ENCODE measurements at regions of chr5 and their contacts with region 1.

Region 1: GRCh38 chr5:39014544-39014943 is 59.7 kb downstream of the RICTOR start:
- DNase-seq: no peak
- ATAC-seq: peak; percentile 91

Region 2: DNA sequence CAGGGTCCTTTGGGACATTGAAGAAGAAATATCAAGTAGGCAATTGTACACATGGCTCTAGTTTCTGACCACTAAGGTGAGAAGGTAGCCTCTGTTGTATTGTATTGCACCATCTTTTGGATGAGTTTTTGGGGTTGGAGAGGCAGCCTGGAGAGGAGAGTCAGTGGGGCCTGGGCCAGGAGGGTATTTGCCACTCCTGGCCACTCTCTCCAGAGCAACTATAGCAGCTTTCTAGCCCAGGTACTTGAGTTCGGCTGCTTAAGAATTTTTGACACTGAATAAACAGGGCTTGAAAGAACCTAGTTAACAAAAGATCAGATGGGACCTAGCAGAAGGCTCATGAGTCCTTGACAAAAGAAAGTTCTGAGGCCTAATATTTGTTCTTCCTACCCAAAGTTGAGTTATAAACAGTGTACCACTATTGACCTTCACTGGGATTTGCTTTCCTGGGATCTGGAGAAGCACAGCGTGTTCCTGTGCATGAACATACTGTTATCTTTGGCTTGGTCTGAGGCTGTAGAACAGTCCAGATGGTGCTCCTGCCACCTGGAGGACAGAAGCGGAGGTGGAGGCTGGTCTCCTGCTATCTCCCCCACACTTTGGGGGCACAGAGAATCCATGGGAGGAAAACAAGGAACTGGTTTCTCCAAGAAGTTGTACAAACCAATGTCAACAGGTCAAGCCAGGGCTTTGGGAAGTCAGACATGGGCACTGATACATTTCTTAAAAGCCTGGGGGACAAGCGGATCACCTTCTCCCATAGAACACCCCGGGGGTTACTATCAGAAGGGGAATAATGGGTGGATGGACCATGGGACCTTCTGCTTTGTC is 347.7 kb before region 1 on chr5:
- intact Hi-C with region 1: no loop called
- DNase-seq: peak; percentile 44
- ATAC-seq: peak; percentile 94

Region 3: GRCh38 chr5:38948501-38948900 is 66.0 kb before region 1 on chr5:
- intact Hi-C with region 1: no loop called
- DNase-seq: no peak
- ATAC-seq: no peak

Region 4: DNA sequence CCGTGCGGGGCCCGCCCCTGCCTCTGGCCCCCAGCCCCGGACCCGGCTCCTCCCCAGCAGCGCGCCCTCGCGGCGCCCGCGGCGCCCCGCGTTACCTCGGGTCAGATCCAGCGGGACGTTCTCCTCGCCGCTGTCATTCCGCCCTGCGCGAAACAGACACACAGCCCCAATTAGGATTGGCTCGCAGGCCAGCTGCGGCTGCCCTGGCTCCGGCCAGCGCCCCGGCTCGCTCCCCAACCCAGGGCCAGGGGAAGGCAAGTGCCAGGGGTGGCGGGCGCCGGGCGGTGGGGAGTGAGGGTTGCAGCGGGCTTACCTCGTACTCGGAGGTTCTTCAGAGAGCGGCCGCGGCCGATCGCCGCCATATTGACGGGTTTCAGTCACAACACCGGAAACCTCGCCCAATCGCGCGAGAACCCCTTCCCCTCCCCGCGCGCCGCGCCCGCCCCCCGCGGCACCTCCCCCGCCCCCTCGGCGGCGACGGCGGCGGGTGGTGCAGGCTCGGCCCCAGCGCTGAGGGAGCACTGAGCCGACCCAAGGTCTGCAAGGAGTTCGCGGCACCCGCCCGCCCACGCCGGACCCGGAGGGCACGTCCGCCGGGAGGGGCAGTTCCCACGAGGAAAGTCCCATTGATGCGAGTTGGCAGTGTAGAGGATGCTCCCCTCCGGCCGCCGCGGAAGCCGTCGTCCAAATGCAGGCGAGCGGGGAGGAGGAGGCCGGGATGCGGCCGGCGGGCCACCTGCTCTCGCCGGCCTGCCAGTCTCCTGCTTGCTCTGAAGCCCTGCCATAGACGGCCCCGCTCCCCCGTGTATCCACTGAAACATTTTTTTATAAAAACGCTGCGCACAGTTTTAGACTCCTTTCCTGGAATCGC is 59.7 kb after region 1 on chr5 and contains the start of gene RICTOR:
- intact Hi-C with region 1: loop called (anchors 5 kb)
- DNase-seq: peak; percentile 97
- ATAC-seq: peak; percentile 95
- total RNA-seq, gene RICTOR: 27.5 TPM

Region 5: DNA sequence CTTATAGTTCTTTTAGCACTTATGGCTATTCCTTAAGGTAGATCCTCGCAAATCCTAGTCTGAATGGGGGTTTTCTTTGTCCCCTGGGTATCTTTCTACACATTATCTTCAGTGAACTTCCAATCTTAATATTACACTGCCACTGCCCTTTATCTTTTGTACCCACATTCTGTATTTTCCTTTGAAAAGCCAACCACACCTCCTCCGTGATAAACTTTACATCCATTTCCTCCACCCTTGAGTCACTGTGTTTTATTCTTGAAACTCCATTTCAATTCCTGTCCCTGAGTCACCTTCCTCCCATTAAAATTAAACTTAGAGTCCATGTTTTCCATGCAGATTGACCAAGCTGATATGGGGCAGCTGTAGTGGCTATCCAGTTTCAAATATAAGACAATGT is 102.9 kb after region 1 on chr5:
- intact Hi-C with region 1: no loop called
- DNase-seq: no peak
- ATAC-seq: no peak

Region 6: GRCh38 chr5:39475881-39476842 is 461.6 kb after region 1 on chr5:
- intact Hi-C with region 1: no loop called
- DNase-seq: no peak
- ATAC-seq: peak; percentile 32